Sigmoid colon (tissue), 7 donors: ENCODE measurements at regions of chr3 and their contacts with region 1.

Region 1: DNA sequence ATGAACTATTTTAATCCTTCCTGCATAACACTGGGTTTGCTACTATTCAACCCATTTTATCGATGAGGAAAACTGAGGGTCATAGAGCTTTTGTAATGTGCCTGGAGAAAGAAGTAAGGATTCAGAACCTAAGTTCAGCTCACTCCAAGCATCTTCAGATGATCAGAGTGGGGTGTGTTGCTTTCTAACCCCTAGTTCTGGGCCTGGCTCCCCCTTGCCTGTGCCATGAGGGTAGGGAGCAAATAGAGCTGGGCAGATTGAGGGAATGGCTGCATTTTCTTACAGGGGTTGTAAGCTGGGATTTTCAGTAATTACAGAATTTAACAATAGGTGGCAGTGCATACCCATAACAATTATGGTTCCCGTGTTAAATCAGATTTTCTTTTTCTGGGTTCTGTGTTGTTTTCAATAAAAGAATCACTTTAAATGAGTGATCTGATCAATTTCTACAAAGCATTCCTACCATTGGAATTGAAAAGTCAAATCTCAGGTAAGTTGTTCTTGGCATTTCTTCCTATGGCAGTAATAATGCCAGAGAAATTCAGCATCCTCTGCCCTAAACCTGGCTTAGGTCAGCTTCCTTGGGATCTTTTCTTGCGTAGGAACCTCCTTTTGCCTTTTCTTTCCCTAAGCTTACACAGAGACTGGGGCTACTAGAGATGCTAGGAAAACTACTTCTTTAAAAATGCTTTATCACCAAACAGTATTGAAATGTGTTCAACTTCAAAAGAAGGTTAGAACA is 103.8 kb upstream of the IL12A start:
- DNase-seq: no peak
- H3K4me3 ChIP-seq: no peak overlapping the region
- H3K27ac ChIP-seq: peak overlapping the region in 2 of 4 donors; percentile 56 to 67
- H3K4me1 ChIP-seq: peaks cover 0 to 75% (median 66%) of the 10 kb centered on the region in 4 donors
- H3K27me3 ChIP-seq: no peaks in the 10 kb centered on the region
- CTCF ChIP-seq: peak; percentile 24 to 49 (median 40)
- EP300 ChIP-seq: no peak
- POLR2A ChIP-seq: no peak

Region 2: DNA sequence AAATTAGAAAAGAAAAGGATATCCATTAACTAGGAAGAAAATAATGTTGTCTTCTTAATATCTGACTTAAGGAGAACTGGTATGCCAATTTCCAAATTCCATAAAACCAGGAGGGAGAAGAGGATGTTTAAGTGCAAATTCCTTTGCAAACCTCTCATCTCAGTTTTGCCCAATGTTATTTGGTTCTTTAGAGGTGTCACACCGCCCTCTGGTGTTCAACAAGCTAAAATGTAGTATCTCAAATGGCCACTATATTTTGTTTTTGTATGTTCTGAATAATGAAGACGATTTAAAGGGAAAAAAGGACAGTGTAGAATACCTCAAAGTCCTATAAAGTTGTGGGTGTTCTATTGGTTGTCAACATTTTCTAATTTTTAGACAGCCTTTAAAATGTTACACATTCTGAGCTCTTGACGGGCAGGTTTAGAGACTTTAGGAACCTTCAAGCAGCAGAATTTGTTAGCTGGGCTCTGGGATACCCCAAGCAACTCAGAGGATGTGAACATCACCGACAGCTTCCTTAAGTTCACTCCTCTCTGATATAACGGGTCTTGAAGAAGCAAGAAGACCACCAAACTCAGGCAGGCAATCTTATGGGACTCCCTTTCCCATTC is 624.7 kb before region 1 on chr3:
- intact Hi-C with region 1: loop called (anchors 10 kb)
- DNase-seq: no peak
- H3K4me3 ChIP-seq: no peak overlapping the region
- H3K27ac ChIP-seq: no peak overlapping the region
- H3K4me1 ChIP-seq: no peaks in the 10 kb centered on the region
- H3K27me3 ChIP-seq: no peaks in the 10 kb centered on the region
- CTCF ChIP-seq: peak; percentile 11 to 68 (median 54)
- EP300 ChIP-seq: no peak
- POLR2A ChIP-seq: no peak

Region 3: GRCh38 chr3:159839561-159840379 is 45.1 kb before region 1 on chr3:
- intact Hi-C with region 1: loop called (anchors 5 kb)
- DNase-seq: peak; percentile 76
- H3K4me3 ChIP-seq: peak within 1 kb of the TSS; percentile 41 to 49 (median 44)
- H3K27ac ChIP-seq: peak within 1 kb of the TSS; percentile 76 to 85 (median 82)
- H3K4me1 ChIP-seq: peaks cover 0 to 91% (median 77%) of the 10 kb centered on the region in 4 donors
- H3K27me3 ChIP-seq: no peaks in the 10 kb centered on the region
- CTCF ChIP-seq: no peak
- EP300 ChIP-seq: no peak
- POLR2A ChIP-seq: no peak

Region 4: GRCh38 chr3:159919873-159920272 is 35.0 kb after region 1 on chr3:
- intact Hi-C with region 1: no loop called
- DNase-seq: no peak
- H3K4me3 ChIP-seq: no peak overlapping the region
- H3K27ac ChIP-seq: no peak overlapping the region
- H3K4me1 ChIP-seq: no peaks in the 10 kb centered on the region
- H3K27me3 ChIP-seq: no peaks in the 10 kb centered on the region
- CTCF ChIP-seq: no peak
- EP300 ChIP-seq: no peak
- POLR2A ChIP-seq: no peak

Region 5: DNA sequence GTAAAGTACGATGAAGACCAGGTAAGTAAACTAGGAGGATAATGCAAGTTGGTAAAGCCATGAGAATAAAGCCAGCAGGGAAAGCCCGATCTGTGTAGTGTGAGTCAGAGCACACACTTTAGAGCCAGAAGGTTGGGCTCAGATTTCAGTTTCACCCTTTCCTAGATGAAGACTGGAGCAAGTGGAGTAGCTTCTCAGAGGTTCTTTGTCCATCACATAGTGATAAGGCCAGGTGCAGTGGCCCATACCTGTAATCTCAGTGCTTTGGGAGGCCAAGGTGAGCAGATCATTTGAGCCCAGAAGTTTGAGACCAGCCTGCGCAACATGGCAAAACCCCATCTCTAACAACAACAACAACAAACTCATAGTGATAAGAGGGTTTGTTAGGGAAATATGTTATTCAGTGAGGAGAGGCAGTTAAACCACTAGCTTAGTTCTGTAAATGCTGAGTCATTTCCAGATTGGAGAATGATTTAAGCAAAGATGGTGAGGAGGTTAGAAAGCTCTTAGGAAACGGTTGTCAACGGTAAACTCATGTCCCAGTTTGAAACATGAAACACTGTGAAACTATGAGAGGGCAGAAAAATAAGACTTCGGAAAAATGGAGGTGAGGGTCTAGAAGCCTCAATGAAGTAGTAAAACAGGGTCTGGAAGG is 142.8 kb after region 1 on chr3:
- intact Hi-C with region 1: no loop called
- DNase-seq: no peak
- H3K4me3 ChIP-seq: no peak overlapping the region
- H3K27ac ChIP-seq: no peak overlapping the region
- H3K4me1 ChIP-seq: no peaks in the 10 kb centered on the region
- H3K27me3 ChIP-seq: no peaks in the 10 kb centered on the region
- CTCF ChIP-seq: no peak
- EP300 ChIP-seq: no peak
- POLR2A ChIP-seq: no peak